Tibial artery (tissue), 4 donors: ENCODE measurements at regions of chr12 and their contacts with region 1.

Region 1: GRCh38 chr12:109713187-109713984 is at the start of gene FAM222A:
- DNase-seq: peak; percentile 93 to 98
- H3K4me3 ChIP-seq: peak within 1 kb of the TSS; percentile 61 to 83
- H3K27ac ChIP-seq: peak within 1 kb of the TSS in 1 of 2 donors; percentile 17
- H3K4me1 ChIP-seq: peaks cover 0 to 27% (median 20%) of the 10 kb centered on the region in 4 donors
- H3K27me3 ChIP-seq: peaks cover 5 to 84% of the 10 kb centered on the region in 2 donors
- CTCF ChIP-seq: peak in 1 of 2 experiments; percentile 33

Region 2: GRCh38 chr12:109458771-109459208 is 254.6 kb before region 1 on chr12:
- intact Hi-C with region 1: loop called (anchors 10 kb)
- DNase-seq: no peak
- H3K4me3 ChIP-seq: no peak overlapping the region
- H3K27ac ChIP-seq: peak overlapping the region; percentile 84 to 95
- H3K4me1 ChIP-seq: peaks cover 5 to 66% (median 64%) of the 10 kb centered on the region in 4 donors
- H3K27me3 ChIP-seq: no peaks in the 10 kb centered on the region
- CTCF ChIP-seq: no peak

Region 3: GRCh38 chr12:109597795-109598427 is 115.5 kb before region 1 on chr12:
- intact Hi-C with region 1: loop called (anchors 1 kb)
- DNase-seq: peak; percentile 78 to 88
- H3K4me3 ChIP-seq: peak overlapping the region in 1 of 2 donors; percentile 17
- H3K27ac ChIP-seq: no peak overlapping the region
- H3K4me1 ChIP-seq: peaks cover 0 to 12% (median 6%) of the 10 kb centered on the region in 4 donors
- H3K27me3 ChIP-seq: peaks cover 0 to 9% of the 10 kb centered on the region in 2 donors
- CTCF ChIP-seq: peak; percentile 93 to 94